AG04450 (cell line): ENCODE measurements at regions of chr1 and their contacts with region 1.

Region 1: GRCh38 chr1:101288491-101288944 is 51.7 kb downstream of the S1PR1 start:
- DNase-seq: peak; percentile 82
- H3K4me3 ChIP-seq: peak overlapping the region; percentile 31; the same call in 1 of the 2 replicates
- H3K27ac ChIP-seq: no peak overlapping the region
- H3K27me3 ChIP-seq: no peaks in the 10 kb centered on the region
- CTCF ChIP-seq: peak; percentile 92

Region 2: DNA sequence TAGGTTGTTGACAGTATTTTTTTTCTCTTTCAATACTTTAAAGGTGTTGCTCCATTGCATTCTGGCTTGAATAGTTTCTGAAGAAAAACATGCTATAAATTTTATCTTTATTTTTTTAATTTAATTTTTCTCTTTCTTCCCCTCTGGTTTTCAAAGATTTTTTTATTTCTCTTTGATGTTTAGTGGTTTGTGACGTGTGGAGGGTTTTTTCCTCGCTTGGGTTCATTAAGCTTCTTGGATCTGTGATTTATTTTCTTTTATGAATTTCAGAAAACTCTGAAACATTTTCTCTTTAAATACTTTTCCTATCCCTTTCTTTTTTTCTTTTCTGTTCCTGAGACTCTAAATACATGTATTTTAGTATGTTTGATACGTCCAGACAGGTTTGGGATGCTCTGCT is 383.3 kb before region 1 on chr1:
- CTCF ChIA-PET with region 1: interaction called, 12 read pairs
- POLR2A ChIA-PET with region 1: no interaction called
- DNase-seq: no peak
- H3K4me3 ChIP-seq: no peak overlapping the region
- H3K27ac ChIP-seq: no peak overlapping the region
- H3K27me3 ChIP-seq: no peaks in the 10 kb centered on the region
- CTCF ChIP-seq: no peak

Region 3: DNA sequence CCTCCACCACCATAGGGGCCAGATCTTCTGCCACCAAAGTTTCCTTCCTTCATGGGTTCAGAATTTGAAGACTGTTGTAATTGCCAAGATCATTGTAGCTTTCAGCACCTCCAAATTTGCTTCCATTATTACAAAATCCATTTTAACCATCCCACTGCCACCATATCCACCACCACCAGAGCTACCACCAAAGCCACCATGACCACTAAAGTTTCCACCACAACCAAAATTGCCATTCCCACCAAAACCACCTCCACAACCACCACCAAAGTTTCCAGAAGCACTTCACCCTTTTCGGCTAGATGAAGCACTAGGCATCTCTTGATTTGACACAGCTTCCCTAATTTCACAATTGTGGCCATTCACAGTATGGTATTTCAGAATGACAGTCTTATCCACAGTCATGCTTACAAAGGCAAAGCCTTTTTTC is 347.4 kb before region 1 on chr1:
- CTCF ChIA-PET with region 1: interaction called, 11 read pairs
- POLR2A ChIA-PET with region 1: no interaction called
- DNase-seq: no peak
- H3K4me3 ChIP-seq: no peak overlapping the region
- H3K27ac ChIP-seq: no peak overlapping the region
- H3K27me3 ChIP-seq: no peaks in the 10 kb centered on the region
- CTCF ChIP-seq: no peak

Region 4: DNA sequence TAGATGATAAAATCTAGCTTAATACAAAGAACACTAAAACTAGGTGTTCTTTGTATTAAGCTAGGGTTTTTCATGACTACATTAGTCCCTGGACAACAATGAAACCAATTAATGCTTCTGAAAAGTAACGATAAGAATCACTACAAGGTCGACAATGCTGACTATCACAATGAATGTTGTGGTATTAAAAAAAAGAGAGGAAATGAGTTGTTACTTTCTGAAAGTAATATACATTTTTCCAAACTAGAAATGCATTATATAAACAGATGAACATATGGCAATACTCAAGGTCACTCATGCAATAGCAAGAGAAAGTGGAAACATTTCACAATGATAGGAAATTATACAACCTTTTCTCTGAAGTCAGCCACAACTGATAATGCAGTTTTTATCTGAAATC is 282.0 kb before region 1 on chr1:
- CTCF ChIA-PET with region 1: interaction called, 10 read pairs
- POLR2A ChIA-PET with region 1: no interaction called
- DNase-seq: no peak
- H3K4me3 ChIP-seq: no peak overlapping the region
- H3K27ac ChIP-seq: no peak overlapping the region
- H3K27me3 ChIP-seq: no peaks in the 10 kb centered on the region
- CTCF ChIP-seq: no peak

Region 5: GRCh38 chr1:101245246-101245927 is 43.1 kb before region 1 on chr1:
- CTCF ChIA-PET with region 1: interaction called, 20 read pairs
- POLR2A ChIA-PET with region 1: no interaction called
- DNase-seq: no peak
- H3K4me3 ChIP-seq: no peak overlapping the region
- H3K27ac ChIP-seq: no peak overlapping the region
- H3K27me3 ChIP-seq: no peaks in the 10 kb centered on the region
- CTCF ChIP-seq: no peak

Region 6: DNA sequence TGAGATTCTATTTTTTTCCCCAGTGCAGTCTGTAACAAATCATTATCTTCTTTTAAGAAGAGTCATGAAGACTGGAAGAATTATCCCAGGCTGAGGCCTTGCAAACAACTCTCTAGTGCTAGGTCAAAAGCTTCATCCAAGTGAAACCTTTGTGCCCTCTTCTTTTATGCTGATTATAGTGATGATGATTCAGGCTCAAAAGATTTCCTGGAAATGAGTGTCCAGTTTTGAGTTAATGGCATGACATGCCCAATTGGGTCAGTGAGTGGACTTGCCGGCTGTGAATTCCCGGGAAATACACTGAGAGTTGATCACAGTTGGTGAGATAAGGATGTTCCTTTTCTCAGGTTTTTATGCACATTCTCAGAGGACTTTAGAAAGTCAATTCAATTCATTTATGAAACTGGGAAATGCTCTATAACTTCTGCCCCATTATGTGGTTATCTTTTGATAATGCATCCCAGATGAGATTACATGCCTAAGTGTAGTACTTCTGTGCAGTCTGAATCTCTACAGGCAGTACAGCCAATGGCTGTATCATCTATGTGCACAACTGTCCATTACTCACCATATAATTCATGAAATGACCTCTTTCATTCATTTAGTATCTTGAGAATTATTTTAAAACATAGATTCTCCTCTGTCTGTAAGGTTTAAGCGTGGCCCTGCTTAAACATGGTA is 14.5 kb after region 1 on chr1:
- CTCF ChIA-PET with region 1: interaction called, 13 read pairs
- POLR2A ChIA-PET with region 1: no interaction called
- DNase-seq: no peak
- H3K4me3 ChIP-seq: no peak overlapping the region
- H3K27ac ChIP-seq: no peak overlapping the region
- H3K27me3 ChIP-seq: peaks cover 11% of the 10 kb centered on the region
- CTCF ChIP-seq: no peak

Region 7: DNA sequence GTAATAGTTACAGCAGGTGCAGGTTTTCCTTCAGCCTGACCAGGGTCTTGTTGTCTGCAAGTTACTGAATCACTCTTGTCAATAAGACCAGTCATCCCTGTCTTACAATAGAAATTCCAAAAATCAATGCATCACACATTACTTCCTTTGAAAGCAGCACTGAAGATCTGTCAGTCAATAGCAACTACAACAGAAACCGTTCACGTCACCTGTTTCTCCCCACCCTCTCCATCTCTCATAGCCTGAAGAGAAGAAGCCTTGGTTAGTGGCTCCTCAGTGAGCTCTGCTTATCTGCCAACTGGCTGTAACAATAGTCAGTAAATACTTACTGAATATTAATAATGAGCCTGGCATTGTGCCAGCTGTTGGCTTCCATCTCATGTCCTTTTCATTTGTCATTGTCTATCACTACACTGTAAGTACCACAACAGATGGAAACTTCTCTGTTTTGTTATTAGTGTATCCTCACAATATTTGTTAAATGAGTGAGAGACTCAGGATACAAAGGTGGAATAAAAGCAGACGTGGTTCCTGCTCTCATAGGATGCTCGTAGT is 143.5 kb after region 1 on chr1:
- CTCF ChIA-PET with region 1: no interaction called
- POLR2A ChIA-PET with region 1: no interaction called
- DNase-seq: no peak
- H3K4me3 ChIP-seq: no peak overlapping the region
- H3K27ac ChIP-seq: no peak overlapping the region
- H3K27me3 ChIP-seq: no peaks in the 10 kb centered on the region
- CTCF ChIP-seq: no peak